Ovary (tissue), 10 donors: ENCODE measurements at regions of chr6 and their contacts with region 1.

Region 1: DNA sequence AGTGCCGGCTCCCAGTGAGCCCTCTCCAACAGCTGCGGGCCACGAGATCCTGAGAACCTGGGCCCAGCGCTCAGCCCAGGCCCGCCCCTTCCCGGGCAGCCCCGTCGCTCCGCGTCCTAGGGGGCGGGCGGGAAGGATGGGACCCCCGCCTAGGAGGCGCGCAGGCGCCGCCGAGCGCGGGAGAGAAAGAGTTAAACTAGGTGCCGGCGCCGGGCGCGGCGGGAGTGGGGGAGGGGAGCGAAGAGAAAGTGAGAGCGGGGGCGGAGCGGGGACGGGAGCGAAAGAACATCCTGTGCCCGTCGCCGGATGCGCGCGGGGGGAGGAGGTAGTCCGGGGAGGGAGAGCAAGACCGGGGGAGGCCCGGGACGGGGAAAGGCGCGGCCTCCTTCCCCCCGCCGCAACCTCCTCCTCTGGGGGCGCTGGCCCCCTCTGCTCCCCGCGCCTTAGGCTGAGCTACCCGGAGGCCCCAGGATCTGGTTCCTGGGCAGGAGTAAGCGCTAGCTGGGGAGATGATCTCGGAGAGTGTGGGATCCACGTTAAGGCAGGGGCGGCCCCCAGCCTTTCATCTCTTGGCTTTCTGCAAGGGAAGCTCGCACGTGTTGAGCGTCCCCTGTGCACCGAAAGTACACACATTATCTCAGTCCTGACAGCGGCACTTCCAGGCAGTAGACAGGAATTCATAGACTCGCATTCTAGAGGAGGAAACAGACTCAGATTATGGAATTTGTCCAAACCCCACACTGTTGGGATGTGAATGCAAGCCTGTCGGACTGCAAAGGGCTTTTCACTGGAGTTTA is 4.9 kb upstream of the ARMC12 start:
- DNase-seq: peak; percentile 97 to 99 (median 99)
- H3K4me3 ChIP-seq: peak overlapping the region; percentile 86
- H3K27ac ChIP-seq: peak overlapping the region; percentile 97
- H3K4me1 ChIP-seq: peaks cover 16% of the 10 kb centered on the region
- H3K27me3 ChIP-seq: no peaks in the 10 kb centered on the region
- CTCF ChIP-seq: peak in 1 of 3 donors; percentile 56
- EP300 ChIP-seq: peak; percentile 73
- POLR2A ChIP-seq: peak; percentile 56

Region 2: DNA sequence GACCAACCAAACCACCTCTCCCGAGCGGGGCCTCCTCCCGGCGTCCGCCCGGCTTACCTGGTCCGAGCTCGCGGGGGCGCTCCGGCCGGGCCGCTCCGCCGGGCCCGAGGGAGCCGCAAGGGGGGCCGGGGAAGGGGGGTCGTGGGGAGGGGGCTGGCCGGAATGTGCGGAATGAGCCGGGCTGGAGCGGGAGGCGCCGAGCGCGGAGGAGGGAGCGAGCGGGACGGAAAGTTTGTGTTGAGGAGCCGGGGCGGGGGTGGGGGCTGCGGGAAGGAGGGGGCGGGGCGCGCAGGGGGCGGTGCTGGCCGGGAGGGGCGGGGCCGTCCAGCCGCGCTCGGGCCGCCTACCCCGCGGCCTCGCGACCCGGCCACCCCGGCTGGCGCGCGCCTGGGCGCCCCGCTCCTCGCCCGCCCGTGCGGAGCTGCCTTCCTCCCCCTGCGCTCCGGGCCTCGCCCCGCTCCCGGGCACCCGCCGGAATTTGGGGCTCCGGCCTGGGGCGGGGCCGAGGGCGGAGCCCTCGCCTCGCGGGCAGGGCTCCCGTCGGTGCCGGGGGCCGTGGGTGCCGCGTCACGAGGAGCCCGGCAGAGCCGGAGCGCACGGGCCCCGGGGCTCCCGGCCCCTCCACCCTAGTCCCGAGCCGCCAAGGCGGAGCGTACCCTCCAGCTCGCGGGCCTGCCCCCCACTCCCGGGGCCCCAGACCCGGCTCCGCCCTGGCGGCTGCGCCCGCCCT is 234.9 kb before region 1 on chr6 and contains the start of gene TEAD3:
- intact Hi-C with region 1: loop called in 1 of 4 experiments (anchors 10 kb)
- DNase-seq: peak; percentile 82 to 88 (median 87)
- H3K4me3 ChIP-seq: peak within 1 kb of the TSS; percentile 95
- H3K27ac ChIP-seq: peak within 1 kb of the TSS; percentile 97 to 99
- H3K4me1 ChIP-seq: peaks cover 27% of the 10 kb centered on the region
- H3K27me3 ChIP-seq: no peaks in the 10 kb centered on the region
- CTCF ChIP-seq: no peak
- EP300 ChIP-seq: no peak
- POLR2A ChIP-seq: peak; percentile 86
- total RNA-seq, gene TEAD3: 15.7 to 63.1 (median 35.6) TPM

Region 3: DNA sequence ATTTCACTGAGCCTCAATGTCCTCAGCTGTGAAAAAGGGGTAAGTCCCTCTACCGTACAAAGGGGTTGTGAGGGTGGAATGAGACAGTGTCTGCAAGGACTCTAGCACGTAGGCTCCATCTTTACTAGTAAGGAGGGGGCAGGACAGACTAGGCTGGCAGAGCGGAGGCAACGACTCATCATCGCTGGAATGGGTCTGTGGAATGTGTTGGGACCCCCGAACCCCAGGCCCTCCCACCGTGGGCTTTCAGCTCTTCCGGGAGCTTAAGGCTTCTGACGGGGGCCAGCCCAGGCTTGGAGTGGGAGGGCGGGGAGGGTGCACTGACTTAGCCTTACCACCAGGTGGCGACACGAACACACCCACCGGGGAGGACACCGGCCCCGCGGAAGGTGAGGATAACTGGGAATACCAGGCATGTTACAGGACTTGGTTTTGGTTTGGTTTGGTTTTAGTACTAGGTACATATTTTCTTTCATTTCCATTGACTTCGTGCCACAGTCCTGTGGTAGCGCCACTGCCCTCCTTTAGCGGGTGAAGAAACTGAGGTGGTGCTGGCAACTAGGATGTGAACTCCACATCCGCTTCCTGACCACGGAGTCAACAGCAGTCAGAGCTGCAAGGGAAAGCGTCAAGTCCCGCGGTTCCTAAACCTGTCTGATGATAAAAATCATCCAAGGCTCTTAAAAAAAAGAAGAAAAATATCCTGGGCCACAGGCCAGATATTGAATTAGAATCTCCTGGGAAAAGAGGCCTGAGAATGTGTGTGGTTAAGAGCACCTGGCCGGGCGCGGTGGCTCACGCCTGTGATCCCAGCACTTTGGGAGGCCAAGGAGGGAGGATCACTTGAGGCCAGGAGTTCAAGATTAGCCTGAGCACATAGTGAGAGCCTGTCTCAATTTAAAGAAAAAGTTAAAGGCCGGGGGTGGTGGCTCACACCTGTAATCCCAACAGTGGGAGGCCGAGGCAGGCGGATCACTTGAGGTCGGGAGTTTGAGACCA is 209.0 kb before region 1 on chr6:
- intact Hi-C with region 1: loop called in 3 of 4 experiments (anchors 1 to 5 kb)
- DNase-seq: peak; percentile 79 to 86 (median 85)
- H3K4me3 ChIP-seq: peak overlapping the region; percentile 22
- H3K27ac ChIP-seq: no peak overlapping the region
- H3K4me1 ChIP-seq: no peaks in the 10 kb centered on the region
- H3K27me3 ChIP-seq: no peaks in the 10 kb centered on the region
- CTCF ChIP-seq: peak; percentile 90 to 98 (median 94)
- EP300 ChIP-seq: no peak
- POLR2A ChIP-seq: no peak

Region 4: GRCh38 chr6:35583893-35584688 is 147.8 kb before region 1 on chr6:
- intact Hi-C with region 1: loop called (anchors 1 to 2 kb)
- DNase-seq: peak in 4 of 5 donors; percentile 60 to 83 (median 72)
- H3K4me3 ChIP-seq: no peak overlapping the region
- H3K27ac ChIP-seq: no peak overlapping the region
- H3K4me1 ChIP-seq: peaks cover 5% of the 10 kb centered on the region
- H3K27me3 ChIP-seq: no peaks in the 10 kb centered on the region
- CTCF ChIP-seq: peak; percentile 77 to 89 (median 85)
- EP300 ChIP-seq: no peak
- POLR2A ChIP-seq: no peak

Region 5: GRCh38 chr6:35589904-35590303 is 142.0 kb before region 1 on chr6:
- intact Hi-C with region 1: loop called in 3 of 4 experiments (anchors 1 to 2 kb)
- DNase-seq: no peak
- H3K4me3 ChIP-seq: no peak overlapping the region
- H3K27ac ChIP-seq: peak overlapping the region; percentile 59 to 83
- H3K4me1 ChIP-seq: peaks cover 26% of the 10 kb centered on the region
- H3K27me3 ChIP-seq: no peaks in the 10 kb centered on the region
- CTCF ChIP-seq: no peak
- EP300 ChIP-seq: no peak
- POLR2A ChIP-seq: no peak

Region 6: GRCh38 chr6:35601331-35602132 is 130.4 kb before region 1 on chr6:
- intact Hi-C with region 1: loop called in 3 of 4 experiments (anchors 1 to 5 kb)
- DNase-seq: peak in 4 of 5 donors; percentile 15 to 76 (median 51)
- H3K4me3 ChIP-seq: peak overlapping the region; percentile 4
- H3K27ac ChIP-seq: peak overlapping the region; percentile 62 to 86
- H3K4me1 ChIP-seq: peaks cover 28% of the 10 kb centered on the region
- H3K27me3 ChIP-seq: no peaks in the 10 kb centered on the region
- CTCF ChIP-seq: no peak
- EP300 ChIP-seq: peak; percentile 99
- POLR2A ChIP-seq: no peak

Region 7: DNA sequence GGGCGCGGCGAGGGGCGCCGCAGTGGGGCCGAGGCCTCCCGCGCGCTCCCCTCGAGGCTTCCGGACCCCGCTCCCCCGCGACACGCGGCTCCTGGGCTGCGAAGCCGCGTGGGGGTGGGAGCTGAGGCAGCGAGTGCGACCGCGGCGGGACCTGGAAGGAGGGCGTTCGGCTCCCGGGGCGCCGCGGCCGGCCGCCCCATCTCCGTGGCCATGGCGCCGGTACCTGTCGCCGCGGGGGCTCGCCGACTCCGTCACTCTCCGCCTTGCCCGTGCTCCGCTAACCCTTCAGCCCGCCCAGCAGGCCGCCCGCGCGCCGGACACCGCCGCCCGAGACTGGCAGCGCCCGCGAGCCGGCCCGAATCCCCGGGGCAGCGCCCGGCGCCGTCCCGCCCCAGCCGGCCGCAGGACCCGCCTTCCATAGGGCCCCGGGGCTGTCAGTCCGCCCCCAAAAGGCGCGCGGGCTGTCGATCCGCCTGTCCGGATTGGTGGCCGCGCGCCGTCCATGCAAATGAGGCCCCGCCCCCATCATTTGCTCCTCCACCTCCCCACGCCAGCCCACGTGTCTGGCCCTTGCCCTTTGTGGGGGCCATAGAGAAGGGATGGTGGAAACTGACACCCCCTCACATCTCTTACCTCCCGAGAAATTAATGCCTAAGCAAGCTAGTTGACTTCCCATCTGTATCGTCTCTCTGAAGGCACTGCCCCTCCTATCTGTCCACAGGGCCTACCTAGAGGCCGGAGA is 43.2 kb before region 1 on chr6 and contains the start of gene FKBP5:
- intact Hi-C with region 1: loop called (anchors 2 to 5 kb)
- DNase-seq: peak; percentile 95 to 98 (median 97)
- H3K4me3 ChIP-seq: peak within 1 kb of the TSS; percentile 91
- H3K27ac ChIP-seq: peak within 1 kb of the TSS; percentile 90 to 92
- H3K4me1 ChIP-seq: peaks cover 10% of the 10 kb centered on the region
- H3K27me3 ChIP-seq: no peaks in the 10 kb centered on the region
- CTCF ChIP-seq: no peak
- EP300 ChIP-seq: no peak
- POLR2A ChIP-seq: peak; percentile 90
- total RNA-seq, gene FKBP5: 36.2 to 231 (median 142) TPM

Region 8: DNA sequence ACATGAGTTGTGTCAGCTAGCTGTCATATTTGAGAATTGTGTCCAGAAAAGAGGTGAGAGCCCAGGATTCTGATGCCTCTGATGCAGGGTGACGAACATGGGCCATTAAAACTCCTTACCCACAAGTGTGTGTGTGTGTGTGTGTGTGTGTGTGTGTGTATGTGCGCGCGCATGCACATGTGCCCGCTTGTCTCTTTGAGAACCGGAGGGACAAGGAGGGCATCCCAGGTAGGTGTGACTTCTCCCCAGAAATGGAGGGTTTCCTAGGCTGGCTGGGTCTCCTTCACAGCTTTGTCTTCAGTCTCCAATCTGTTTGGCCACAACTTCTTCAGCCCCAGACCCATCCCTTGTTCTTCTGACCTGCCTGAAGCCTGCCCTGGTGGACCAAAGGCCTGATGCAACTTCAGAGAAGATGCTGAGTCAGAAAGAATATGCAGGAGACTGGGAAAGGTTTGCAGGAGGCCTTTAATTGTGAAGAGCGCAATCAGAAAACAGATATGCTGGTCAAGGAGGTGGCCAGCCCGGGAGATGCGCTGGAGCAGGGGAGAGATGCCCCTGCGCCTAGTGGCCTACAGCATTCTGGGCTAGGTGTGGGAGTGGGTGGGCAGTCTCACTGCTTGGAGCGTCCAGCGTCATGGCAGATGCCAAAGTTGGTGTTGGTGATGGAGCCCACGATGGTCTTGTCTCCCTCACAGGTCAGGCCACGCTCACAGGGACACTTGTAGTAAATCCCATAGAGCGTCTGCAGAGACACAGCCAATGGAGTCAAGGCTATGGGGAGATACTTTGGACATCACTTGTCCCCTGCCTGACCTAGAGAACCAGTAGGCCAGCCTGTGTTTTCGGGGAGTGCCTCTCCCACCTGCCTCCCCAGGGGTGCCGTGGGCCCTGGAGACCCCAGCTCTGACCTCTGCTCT is 62.9 kb after region 1 on chr6:
- intact Hi-C with region 1: no loop called
- DNase-seq: no peak
- H3K4me3 ChIP-seq: no peak overlapping the region
- H3K27ac ChIP-seq: no peak overlapping the region
- H3K4me1 ChIP-seq: no peaks in the 10 kb centered on the region
- H3K27me3 ChIP-seq: no peaks in the 10 kb centered on the region
- CTCF ChIP-seq: no peak
- EP300 ChIP-seq: no peak
- POLR2A ChIP-seq: no peak

Region 9: GRCh38 chr6:35804996-35805736 is 73.2 kb after region 1 on chr6 and contains the start of gene LHFPL5:
- intact Hi-C with region 1: no loop called
- DNase-seq: peak in 4 of 5 donors; percentile 15 to 71 (median 56)
- H3K4me3 ChIP-seq: no peak within 1 kb of the TSS
- H3K27ac ChIP-seq: no peak within 1 kb of the TSS
- H3K4me1 ChIP-seq: peaks cover 2% of the 10 kb centered on the region
- H3K27me3 ChIP-seq: no peaks in the 10 kb centered on the region
- CTCF ChIP-seq: no peak
- EP300 ChIP-seq: no peak
- POLR2A ChIP-seq: no peak
- total RNA-seq, gene LHFPL5: not detected